OCI-LY7 (cell line): ENCODE measurements at regions of chr18 and their contacts with region 1.

Region 1: DNA sequence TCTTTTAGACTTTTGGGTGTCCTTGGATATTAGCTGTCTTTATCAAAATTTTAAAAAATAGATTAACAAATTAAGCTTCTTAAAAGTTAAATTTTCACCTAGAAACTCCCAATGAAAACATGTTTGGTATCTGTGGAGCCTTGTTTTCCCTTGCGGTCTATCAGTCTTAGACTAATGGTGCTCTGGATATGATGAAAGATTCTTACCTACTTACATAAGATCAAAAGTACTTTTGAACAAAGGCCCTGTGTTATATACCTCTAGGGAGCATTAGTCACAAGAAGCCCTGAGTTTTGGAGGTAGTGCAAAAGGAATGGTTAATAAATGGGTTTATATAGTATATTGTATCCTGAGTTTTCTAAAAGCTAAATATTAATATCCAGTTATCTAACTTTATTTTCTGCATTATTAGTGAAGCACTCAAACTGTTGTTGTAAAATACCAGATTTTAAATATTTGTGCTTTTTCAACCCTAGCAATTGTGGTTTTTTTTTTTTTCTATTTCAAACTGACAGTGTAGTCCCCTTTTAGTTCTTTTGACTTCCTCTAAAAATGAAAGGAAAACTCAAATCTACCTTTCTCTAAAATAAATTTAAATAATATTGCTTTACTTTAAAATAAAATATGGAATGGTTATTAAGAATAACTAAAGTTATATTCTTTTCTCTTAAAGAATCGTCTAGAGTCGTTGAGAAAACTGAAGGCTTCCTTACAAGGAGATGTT is 18.1 kb downstream of the NDC80 start:
- DNase-seq: no peak
- H3K4me3 ChIP-seq: no peak overlapping the region
- H3K27ac ChIP-seq: no peak overlapping the region
- H3K4me1 ChIP-seq: no peaks in the 10 kb centered on the region
- CTCF ChIP-seq: no peak

Region 2: DNA sequence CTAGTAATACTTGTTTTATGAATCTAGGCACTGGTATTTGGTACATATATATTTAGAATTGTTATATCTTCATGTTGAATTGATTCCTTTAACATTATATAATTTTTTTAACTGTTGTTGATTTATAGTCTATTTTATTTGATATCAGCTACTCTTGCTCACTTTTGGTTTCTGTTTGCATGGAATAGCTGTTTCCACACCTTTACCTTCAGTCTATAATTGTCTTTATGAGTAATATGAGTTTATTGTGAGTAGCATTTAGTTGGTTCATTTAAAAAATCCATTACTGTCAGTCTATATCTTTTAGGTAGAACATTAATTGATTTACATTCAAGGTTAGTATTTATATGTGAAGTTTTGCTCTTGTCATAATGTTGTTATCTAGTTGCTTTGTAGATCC is 124.6 kb after region 1 on chr18:
- CTCF ChIA-PET with region 1: no interaction called
- POLR2A ChIA-PET with region 1: interaction called, 4 read pairs
- intact Hi-C with region 1: loop called (anchors 5 kb)
- DNase-seq: no peak
- H3K4me3 ChIP-seq: no peak overlapping the region
- H3K27ac ChIP-seq: no peak overlapping the region
- H3K4me1 ChIP-seq: no peaks in the 10 kb centered on the region
- CTCF ChIP-seq: no peak